ENCODE measurements at regions of chr11 and their contacts with region 1.

Region 1: DNA sequence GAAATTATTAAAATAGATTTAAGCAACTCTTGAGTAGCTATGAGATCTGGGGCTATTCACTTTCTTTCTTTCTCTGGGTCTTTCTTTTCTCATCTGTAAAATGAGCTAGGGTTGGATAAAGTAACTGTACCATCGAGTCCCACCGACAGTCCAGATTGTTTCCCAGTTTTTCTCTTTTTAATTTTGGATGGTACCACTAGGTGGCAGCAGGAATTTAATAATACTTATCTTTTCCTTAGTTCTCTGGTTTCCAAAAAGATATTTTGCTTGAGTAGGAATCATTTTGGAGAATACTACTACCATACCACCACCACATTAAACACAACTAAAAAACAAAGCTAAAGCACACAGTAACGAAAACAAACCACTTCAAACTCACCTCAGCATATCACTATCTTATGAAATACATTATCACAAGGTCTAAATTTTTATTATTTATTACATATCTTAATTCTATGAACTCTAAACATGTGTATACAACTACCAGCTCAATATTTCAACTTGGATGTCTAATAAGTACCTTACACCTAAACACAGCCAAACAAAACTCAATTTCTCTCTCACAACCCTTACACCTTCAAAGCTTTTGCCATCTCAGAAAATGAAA is 584.0 kb downstream of the KCNA4 start:
- DNase-seq: no peak
- H3K4me3 ChIP-seq: no peak overlapping the region
- H3K27ac ChIP-seq: no peak overlapping the region
- H3K4me1 ChIP-seq: no peaks in the 10 kb centered on the region
- H3K27me3 ChIP-seq: no peaks in the 10 kb centered on the region
- CTCF ChIP-seq: peak in 1 of 3 experiments; percentile 31; a peak in 2 of 4 replicates
- EP300 ChIP-seq: no peak
- POLR2A ChIP-seq: no peak
- RAD21 ChIP-seq: peak; percentile 49 to 58

Region 2: GRCh38 chr11:29328961-29329441 is 103.8 kb before region 1 on chr11:
- CTCF ChIA-PET with region 1: no interaction called
- POLR2A ChIA-PET with region 1: no interaction called
- DNase-seq: no peak
- H3K4me3 ChIP-seq: no peak overlapping the region
- H3K27ac ChIP-seq: no peak overlapping the region
- H3K4me1 ChIP-seq: no peaks in the 10 kb centered on the region
- H3K27me3 ChIP-seq: no peaks in the 10 kb centered on the region
- CTCF ChIP-seq: peak in 2 of 3 experiments; percentile 28 to 46; a peak in 2 of 4 replicates
- EP300 ChIP-seq: no peak
- POLR2A ChIP-seq: no peak
- RAD21 ChIP-seq: peak; percentile 58 to 68

Region 3: GRCh38 chr11:29448246-29448877 is 15.5 kb after region 1 on chr11:
- CTCF ChIA-PET with region 1: interaction called, 10 read pairs
- POLR2A ChIA-PET with region 1: no interaction called
- DNase-seq: no peak
- H3K4me3 ChIP-seq: no peak overlapping the region
- H3K27ac ChIP-seq: no peak overlapping the region
- H3K4me1 ChIP-seq: no peaks in the 10 kb centered on the region
- H3K27me3 ChIP-seq: no peaks in the 10 kb centered on the region
- CTCF ChIP-seq: peak in 2 of 3 experiments; percentile 54 to 68; a peak in 3 of 4 replicates
- EP300 ChIP-seq: no peak
- POLR2A ChIP-seq: no peak
- RAD21 ChIP-seq: peak; percentile 88 to 92